ENCODE measurements at regions of chr10 and their contacts with region 1.

Region 1: GRCh38 chr10:132331526-132332432 is at the start of gene LRRC27:
- DNase-seq: peak; percentile 98
- H3K4me3 Mint-ChIP-seq: peak within 1 kb of the TSS; percentile 92
- H3K27ac Mint-ChIP-seq: peak within 1 kb of the TSS; percentile 87
- H3K4me1 Mint-ChIP-seq: peaks cover 63% of the 10 kb centered on the region
- H3K27me3 Mint-ChIP-seq: no peaks in the 10 kb centered on the region
- total RNA-seq, gene LRRC27: 1.5 to 1.9 TPM

Region 2: DNA sequence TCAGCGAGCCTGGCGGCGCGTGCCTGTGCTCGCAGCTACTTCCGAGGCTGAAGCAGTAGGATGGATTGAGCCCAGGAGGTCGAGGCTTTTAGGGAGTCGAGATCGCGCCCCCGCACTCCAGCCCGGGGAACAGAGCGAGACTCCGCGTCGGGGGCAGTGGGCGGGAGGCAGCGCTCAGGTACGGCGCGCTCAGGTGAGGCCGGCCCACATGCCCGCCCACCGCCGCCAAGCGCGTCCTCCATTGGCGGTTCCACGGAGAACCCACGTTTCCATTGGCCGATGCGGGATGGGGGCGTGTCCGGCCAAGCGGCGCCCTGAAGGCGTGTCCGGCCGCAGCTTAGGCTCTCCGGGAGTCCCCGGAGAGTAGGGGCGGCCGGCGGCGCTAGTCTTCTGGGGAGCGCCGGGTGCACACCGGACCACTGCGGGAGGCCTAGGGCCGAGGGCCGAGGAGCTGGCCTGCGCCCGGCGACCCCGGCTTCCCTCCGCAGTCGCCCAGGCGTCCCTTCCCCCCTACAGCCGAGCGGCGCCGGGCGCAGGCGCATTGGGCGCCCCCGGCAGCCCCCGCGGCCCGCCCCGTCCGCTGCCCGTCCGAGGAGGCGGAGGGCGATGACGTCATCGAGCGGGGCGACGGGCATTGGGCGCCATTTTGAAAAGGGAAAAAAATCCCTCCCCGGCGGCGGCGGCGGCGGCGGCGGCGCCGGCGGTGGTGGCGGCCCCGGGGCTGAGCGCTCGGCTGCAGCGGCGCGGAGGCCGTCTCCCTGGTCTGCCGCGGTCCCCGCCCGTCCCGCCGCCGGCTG is 431.2 kb before region 1 on chr10 and contains the start of gene PPP2R2D:
- CTCF ChIA-PET with region 1: no interaction called
- intact Hi-C with region 1: loop called (anchors 2 kb)
- DNase-seq: peak; percentile 94
- H3K4me3 Mint-ChIP-seq: peak within 1 kb of the TSS; percentile 87
- H3K27ac Mint-ChIP-seq: peak within 1 kb of the TSS; percentile 92
- H3K4me1 Mint-ChIP-seq: peaks cover 47% of the 10 kb centered on the region
- H3K27me3 Mint-ChIP-seq: peaks cover 4% of the 10 kb centered on the region
- total RNA-seq, gene PPP2R2D: 31.5 to 34.7 TPM

Region 3: DNA sequence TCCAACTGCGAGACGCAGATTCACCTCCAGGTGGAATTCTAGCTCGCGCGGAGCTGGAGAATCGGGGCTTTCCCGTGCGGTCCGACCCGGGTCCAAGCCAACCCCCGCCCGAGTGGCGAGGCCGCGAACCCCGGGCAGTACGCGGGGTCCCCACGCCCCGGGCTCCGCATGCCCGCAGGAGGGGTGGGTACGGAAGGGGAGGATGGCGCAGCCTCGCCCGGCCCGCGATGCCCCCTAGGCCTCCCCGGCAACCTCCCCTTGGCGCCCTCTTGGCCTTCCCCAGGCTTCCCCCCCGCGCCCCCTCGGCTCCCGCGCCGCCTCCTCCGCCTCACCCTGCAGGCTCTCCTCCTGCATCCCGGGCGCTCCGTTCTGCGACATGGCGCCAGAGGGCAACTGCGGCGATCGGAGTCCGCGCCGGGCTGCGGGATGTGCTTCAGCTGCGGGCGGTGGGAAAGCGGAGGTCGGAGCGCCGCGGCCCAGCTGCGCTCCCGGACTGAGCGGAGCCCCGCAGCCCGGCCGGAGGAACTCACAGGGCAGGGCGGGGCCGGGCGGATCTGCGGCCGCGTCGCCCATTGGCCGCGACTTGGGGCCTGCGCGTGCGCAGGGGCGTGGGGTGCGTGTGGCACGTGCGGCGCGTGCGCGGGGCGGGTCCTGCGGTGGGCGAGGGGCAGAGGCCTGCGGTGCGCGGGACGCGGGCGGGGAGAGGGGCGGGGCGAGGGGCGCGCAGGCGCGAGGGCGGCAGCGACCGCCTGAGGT is 350.2 kb before region 1 on chr10 and contains the start of gene BNIP3:
- CTCF ChIA-PET with region 1: no interaction called
- intact Hi-C with region 1: loop called (anchors 10 kb)
- DNase-seq: peak; percentile 94
- H3K4me3 Mint-ChIP-seq: peak within 1 kb of the TSS; percentile 83
- H3K27ac Mint-ChIP-seq: peak within 1 kb of the TSS; percentile 65
- H3K4me1 Mint-ChIP-seq: peaks cover 35% of the 10 kb centered on the region
- H3K27me3 Mint-ChIP-seq: no peaks in the 10 kb centered on the region
- total RNA-seq, gene BNIP3: 55.5 to 55.9 TPM

Region 4: DNA sequence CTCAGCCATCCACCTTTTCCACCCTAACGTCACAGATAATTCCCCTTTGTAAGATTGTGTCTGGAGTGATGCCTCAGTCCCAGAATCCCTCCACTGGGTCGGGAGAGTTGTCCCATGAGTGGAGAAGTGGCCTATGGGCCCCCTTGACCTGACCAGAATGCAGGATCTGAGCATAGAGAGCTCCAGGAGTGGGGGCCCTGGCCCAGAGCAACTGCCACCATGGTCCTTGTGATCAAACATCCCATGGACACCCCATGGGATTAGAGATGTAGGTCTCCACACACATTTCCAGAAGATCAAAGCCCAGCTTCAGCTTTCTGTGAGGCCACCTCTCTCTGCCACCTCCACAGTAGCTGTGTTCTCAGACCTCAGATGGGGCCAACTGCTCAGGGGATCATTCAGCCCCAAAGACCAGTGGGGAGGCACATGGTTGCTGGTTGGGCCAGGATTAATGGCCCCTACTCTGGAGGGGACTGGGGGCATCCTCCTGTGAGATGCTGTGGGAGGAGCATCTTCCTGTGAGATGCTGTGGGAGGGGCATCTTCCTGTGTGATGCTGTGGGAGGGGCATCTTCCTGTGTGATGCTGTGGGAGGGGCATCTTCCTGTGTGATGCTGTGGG is 173.5 kb before region 1 on chr10:
- CTCF ChIA-PET with region 1: no interaction called
- intact Hi-C with region 1: loop called (anchors 5 kb)
- DNase-seq: peak; percentile 46
- H3K4me3 Mint-ChIP-seq: peak overlapping the region; percentile 7
- H3K27ac Mint-ChIP-seq: peak overlapping the region; percentile 67
- H3K4me1 Mint-ChIP-seq: peaks cover 26% of the 10 kb centered on the region
- H3K27me3 Mint-ChIP-seq: no peaks in the 10 kb centered on the region

Region 5: GRCh38 chr10:132319853-132320669 is 11.7 kb before region 1 on chr10:
- CTCF ChIA-PET with region 1: no interaction called
- intact Hi-C with region 1: loop called (anchors 1 kb)
- DNase-seq: peak; percentile 64
- H3K4me3 Mint-ChIP-seq: no peak overlapping the region
- H3K27ac Mint-ChIP-seq: no peak overlapping the region
- H3K4me1 Mint-ChIP-seq: peaks cover 14% of the 10 kb centered on the region
- H3K27me3 Mint-ChIP-seq: no peaks in the 10 kb centered on the region

Region 6: GRCh38 chr10:132396495-132397035 is 64.8 kb after region 1 on chr10:
- CTCF ChIA-PET with region 1: no interaction called
- intact Hi-C with region 1: loop called (anchors 2 kb)
- DNase-seq: peak; percentile 65
- H3K4me3 Mint-ChIP-seq: no peak overlapping the region
- H3K27ac Mint-ChIP-seq: no peak overlapping the region
- H3K4me1 Mint-ChIP-seq: peaks cover 13% of the 10 kb centered on the region
- H3K27me3 Mint-ChIP-seq: no peaks in the 10 kb centered on the region

Region 7: DNA sequence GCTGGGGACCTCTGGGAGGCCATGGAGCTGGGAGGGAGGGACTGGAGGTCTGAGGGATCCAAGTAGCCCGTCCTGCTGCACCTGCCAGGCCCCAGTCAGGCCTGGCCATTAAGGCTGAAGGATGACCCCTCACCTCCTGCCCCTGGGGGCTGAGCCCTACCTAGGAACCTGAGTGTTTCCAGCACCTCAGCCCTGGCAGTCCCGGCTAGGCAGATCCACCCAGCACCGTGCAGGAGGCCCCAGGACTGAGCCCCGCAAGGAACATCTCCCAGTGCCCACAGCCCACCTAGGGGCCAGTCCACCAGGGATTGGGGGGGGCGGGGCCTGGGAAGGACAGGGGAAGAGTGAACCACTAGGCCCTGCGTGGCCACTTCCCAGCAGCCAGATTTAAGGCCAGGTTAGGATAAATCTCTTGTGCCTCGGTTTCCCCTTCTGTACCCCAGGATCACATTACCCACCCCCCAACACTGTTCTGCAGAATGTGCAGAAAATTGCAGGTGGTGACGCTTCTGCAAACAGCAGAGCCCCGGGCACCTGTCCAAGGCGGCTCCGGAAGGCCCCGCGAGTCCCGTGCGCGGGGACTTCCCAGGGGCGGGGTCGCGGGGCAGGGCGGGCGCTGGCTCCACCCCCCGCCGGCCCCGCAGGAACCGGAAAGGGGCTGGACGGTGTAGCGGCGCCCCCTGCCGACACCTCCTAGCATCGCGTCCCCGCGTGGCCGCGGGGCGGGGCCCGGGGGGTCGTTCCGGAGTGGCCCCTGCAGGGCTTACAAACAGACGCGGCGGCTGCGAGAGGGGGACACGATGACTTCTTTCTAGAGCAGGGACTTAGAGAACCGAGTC is 121.1 kb after region 1 on chr10:
- CTCF ChIA-PET with region 1: no interaction called
- intact Hi-C with region 1: loop called (anchors 2 kb)
- DNase-seq: peak; percentile 90
- H3K4me3 Mint-ChIP-seq: peak overlapping the region; percentile 6
- H3K27ac Mint-ChIP-seq: peak overlapping the region; percentile 24
- H3K4me1 Mint-ChIP-seq: peaks cover 19% of the 10 kb centered on the region
- H3K27me3 Mint-ChIP-seq: no peaks in the 10 kb centered on the region

Measured in activated naive CD4-positive, alpha-beta T cell treated with anti-CD3 and anti-CD28 coated beads for 36 hours (primary cell).